Activated CD4-positive, alpha-beta memory T cell treated with anti-CD3 and anti-CD28 coated beads for 36 hours (primary cell): ENCODE measurements at regions of chrX and their contacts with region 1.

Region 1: GRCh38 chrX:10098270-10098713 is 58.5 kb upstream of the CLCN4 start:
- DNase-seq: peak; percentile 78
- H3K4me3 Mint-ChIP-seq: peak overlapping the region; percentile 69
- H3K27ac Mint-ChIP-seq: peak overlapping the region; percentile 90
- H3K4me1 Mint-ChIP-seq: peaks cover 46% of the 10 kb centered on the region
- H3K27me3 Mint-ChIP-seq: no peaks in the 10 kb centered on the region

Region 2: GRCh38 chrX:9677098-9677739 is 421.1 kb before region 1 on chrX:
- CTCF ChIA-PET with region 1: no interaction called
- POLR2A ChIA-PET with region 1: no interaction called
- intact Hi-C with region 1: loop called (anchors 5 kb)
- DNase-seq: peak; percentile 43
- H3K4me3 Mint-ChIP-seq: no peak overlapping the region
- H3K27ac Mint-ChIP-seq: peak overlapping the region; percentile 14
- H3K4me1 Mint-ChIP-seq: peaks cover 20% of the 10 kb centered on the region
- H3K27me3 Mint-ChIP-seq: no peaks in the 10 kb centered on the region

Region 3: DNA sequence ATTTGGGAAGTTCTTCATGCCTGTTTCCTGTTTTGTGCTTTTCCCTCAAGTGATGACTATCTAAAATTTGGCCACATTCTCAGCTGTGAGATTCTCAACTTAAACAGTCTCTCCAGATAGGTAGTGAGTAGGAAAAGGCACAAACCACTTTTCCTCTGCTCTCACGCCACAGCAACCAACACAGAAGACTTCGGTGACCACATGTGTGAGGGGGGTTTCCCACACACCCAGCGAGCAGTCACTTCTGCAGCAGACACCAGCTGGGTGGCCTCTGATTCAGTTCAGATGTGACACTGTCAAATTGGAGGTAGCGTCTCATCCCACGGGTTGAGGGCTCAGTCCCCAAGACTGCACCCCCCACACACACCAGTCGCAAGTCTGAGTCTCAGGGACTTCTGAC is 156.2 kb before region 1 on chrX:
- CTCF ChIA-PET with region 1: no interaction called
- POLR2A ChIA-PET with region 1: interaction called, 3 read pairs
- intact Hi-C with region 1: loop called (anchors 5 kb)
- DNase-seq: peak; percentile 83
- H3K4me3 Mint-ChIP-seq: no peak overlapping the region
- H3K27ac Mint-ChIP-seq: peak overlapping the region; percentile 57
- H3K4me1 Mint-ChIP-seq: peaks cover 14% of the 10 kb centered on the region
- H3K27me3 Mint-ChIP-seq: peaks cover 19% of the 10 kb centered on the region

Region 4: DNA sequence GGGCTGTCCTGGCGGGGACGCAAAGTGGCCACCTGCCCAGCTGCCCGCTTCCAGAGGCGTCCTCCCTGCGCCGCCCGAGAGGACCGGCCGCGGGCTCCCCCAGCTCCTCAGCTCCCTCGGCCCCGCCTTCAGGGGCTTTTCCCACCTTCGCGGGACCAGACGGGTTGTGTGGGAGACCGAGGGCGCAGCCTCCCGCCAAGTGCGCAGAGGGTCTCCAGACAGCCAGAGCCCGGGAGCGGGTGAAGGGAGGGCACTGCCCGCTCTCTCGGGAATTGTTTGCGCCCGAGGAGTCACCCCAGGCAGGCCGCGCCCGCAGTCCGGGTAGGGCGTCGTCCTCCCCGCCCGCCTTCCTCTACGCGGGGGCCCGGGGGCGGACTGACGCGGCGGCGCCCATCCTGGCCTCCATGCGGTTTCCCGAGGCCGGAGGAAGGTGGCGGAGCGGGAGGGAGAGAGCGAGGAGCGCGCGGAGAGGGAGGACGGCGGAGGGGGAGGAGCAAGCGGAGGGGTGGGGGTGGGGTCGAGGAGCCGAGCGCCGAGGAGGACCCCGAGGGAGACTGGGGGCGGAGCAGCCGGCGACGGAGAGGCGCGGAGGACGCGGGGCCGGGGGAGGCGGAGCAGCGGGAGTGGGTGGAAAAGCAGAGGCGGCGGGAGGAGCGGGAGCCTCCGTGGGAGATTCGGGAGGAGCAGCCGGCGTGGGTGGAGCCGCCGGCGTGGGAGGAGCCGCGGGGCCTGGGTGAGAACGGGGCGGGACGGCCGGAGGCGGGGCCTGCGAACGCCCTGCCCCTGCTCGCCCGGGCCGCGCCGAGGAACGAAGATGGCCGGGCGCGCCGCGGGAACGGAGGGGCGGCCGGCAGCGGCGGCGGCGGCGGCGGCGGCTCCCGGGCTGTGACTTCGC is 83.6 kb before region 1 on chrX:
- CTCF ChIA-PET with region 1: no interaction called
- POLR2A ChIA-PET with region 1: interaction called, 4 read pairs
- intact Hi-C with region 1: loop called (anchors 5 kb)
- DNase-seq: peak; percentile 75
- H3K4me3 Mint-ChIP-seq: peak overlapping the region; percentile 68
- H3K27ac Mint-ChIP-seq: no peak overlapping the region
- H3K4me1 Mint-ChIP-seq: peaks cover 42% of the 10 kb centered on the region
- H3K27me3 Mint-ChIP-seq: peaks cover 6% of the 10 kb centered on the region

Region 5: DNA sequence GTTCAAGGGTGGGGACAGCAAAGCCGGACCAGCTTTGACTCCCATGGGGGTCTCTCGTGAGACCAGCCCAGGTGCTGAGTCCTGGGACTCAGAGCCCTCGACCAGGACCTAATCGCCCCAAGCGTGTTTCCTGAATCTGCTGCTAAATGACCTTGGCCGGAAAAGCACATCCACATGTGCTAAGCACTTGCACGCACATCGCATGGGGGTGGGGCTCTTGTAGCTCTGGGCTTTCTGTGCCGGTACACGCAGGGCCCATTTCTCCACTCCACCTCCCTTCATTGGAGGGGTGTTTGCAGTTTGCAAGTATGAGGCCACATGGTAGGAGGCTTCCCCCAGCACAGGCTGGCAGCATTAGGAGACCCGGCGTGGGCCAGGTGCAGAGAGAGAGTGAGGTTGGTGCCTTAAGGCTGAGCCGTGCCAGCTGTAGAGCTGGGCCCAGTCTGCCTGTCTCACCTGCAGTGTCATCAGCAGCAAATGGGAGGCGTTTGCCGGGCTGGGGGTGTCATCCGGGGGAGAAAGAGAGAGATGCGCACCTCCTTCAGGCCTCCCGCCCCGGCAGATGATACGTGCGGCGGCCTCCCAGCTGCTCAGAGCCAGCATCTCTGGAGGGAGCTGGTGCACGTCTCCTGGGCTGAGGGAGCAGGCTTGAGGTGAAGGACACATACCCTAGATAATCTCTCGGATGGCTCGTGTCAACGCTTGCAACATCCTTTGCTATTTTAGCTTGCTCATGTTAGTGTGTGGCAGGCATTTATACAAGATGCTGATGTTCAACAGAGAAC is 13.3 kb after region 1 on chrX:
- CTCF ChIA-PET with region 1: interaction called, 6 read pairs
- POLR2A ChIA-PET with region 1: interaction called, 14 read pairs
- intact Hi-C with region 1: loop called (anchors 1 kb)
- DNase-seq: peak; percentile 63
- H3K4me3 Mint-ChIP-seq: peak overlapping the region; percentile 69
- H3K27ac Mint-ChIP-seq: peak overlapping the region; percentile 94
- H3K4me1 Mint-ChIP-seq: peaks cover 62% of the 10 kb centered on the region
- H3K27me3 Mint-ChIP-seq: no peaks in the 10 kb centered on the region

Region 6: GRCh38 chrX:11111038-11111851 is 1013.0 kb after region 1 on chrX and contains the start of gene HCCS:
- CTCF ChIA-PET with region 1: no interaction called
- POLR2A ChIA-PET with region 1: no interaction called
- intact Hi-C with region 1: loop called (anchors 5 kb)
- DNase-seq: peak; percentile 90
- H3K4me3 Mint-ChIP-seq: no peak within 1 kb of the TSS
- H3K27ac Mint-ChIP-seq: peak within 1 kb of the TSS; percentile 95
- H3K4me1 Mint-ChIP-seq: peaks cover 16% of the 10 kb centered on the region
- H3K27me3 Mint-ChIP-seq: no peaks in the 10 kb centered on the region
- total RNA-seq, gene HCCS: 23.5 to 26.8 TPM